Posterior cingulate gyrus (tissue), 11 donors: ENCODE measurements at regions of chr16 and their contacts with region 1.

Region 1: DNA sequence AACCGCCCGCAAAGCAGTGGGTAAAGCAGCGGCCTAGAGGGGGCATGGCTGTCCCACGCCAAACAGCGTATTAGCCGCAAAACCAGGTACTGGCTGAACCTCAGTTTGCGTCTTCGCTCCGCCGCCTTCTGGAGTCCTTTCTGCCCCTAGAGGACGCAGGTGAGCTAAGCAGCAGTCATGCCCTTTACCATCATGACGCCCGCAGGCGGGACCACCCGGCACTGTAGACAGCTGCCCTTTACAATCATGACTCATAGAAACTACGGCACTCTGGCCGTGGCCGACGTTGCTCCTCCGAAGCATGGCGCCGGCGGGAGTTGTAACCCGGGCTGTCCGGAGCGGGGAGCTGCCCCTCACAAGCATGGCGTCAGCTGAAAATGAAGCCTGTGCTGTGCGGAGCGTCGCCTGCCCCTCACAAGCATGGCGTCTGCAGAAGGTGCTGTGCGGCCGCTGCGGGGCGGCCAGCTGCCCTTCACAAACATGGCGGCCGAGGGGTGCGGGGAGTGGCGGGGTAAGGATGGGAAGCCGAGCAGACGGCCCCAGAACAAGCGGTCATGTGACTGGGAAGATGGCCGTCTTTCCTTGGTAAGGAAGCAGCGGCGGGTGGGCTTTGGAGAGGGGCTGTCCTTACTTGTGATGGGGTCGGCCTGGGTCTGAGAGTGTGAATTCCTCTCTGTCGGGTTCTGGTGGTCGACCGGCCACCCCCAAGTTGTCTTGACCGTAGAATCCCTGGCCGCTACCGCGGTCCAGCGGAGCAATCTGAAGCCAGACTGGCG is at the start of gene VPS35L:
- DNase-seq: peak; percentile 93 to 99 (median 96)

Region 2: GRCh38 chr16:19523648-19524355 is 31.5 kb before region 1 on chr16 and contains the start of gene CCP110:
- intact Hi-C with region 1: loop called (anchors 1 kb)
- DNase-seq: peak; percentile 98 to 100 (median 99)

Region 3: DNA sequence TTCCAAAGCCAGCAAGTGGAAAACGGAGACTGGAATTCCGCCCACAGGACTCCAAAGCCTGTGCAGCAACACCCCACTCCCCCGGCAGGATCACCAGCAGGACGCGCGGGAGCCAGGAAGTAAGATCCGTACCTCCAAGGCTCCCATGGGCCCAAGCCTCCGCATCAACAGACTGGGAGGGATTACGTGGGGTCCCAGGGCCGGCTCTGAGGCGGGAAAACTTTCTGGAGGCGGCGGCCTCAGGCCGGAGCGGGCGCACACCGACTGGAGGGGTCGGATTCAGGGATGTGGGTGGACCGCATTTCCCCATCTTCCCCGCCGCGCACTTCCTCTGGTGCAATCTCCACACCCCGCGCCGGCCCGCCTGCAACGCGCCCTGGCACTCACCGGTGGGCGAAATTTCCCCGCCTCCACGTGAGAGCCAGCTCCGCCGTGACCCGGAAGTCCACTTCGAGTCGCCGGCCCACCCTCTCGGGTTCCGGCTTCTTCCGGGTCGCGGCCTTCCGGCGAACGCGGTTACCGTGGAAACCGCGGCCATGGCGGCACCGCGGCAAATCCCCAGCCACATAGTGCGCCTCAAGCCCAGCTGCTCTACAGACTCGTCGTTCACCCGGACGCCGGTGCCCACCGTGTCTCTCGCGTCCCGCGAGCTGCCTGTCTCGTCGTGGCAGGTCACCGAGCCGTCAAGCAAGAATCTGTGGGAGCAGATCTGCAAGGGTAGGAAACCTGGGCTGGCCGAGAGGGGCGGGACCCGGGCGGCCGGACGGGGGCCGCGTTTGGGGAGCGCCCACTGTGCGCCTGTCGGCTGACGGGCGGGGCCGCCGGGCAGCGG is 162.6 kb after region 1 on chr16 and contains the starts of genes IQCK and KNOP1:
- intact Hi-C with region 1: loop called (anchors 5 kb)
- DNase-seq: peak; percentile 80 to 98 (median 89)